ENCODE measurements at regions of chr2 and their contacts with region 1.

Region 1: GRCh38 chr2:160429248-160430000 is 64.2 kb downstream of the RBMS1 start:
- DNase-seq: peak; percentile 87
- H3K4me3 ChIP-seq: peak overlapping the region; percentile 35
- H3K27ac ChIP-seq: peak overlapping the region; percentile 90
- H3K4me1 ChIP-seq: peaks cover 68% of the 10 kb centered on the region
- H3K27me3 ChIP-seq: no peaks in the 10 kb centered on the region
- CTCF ChIP-seq: peak; percentile 70

Region 2: DNA sequence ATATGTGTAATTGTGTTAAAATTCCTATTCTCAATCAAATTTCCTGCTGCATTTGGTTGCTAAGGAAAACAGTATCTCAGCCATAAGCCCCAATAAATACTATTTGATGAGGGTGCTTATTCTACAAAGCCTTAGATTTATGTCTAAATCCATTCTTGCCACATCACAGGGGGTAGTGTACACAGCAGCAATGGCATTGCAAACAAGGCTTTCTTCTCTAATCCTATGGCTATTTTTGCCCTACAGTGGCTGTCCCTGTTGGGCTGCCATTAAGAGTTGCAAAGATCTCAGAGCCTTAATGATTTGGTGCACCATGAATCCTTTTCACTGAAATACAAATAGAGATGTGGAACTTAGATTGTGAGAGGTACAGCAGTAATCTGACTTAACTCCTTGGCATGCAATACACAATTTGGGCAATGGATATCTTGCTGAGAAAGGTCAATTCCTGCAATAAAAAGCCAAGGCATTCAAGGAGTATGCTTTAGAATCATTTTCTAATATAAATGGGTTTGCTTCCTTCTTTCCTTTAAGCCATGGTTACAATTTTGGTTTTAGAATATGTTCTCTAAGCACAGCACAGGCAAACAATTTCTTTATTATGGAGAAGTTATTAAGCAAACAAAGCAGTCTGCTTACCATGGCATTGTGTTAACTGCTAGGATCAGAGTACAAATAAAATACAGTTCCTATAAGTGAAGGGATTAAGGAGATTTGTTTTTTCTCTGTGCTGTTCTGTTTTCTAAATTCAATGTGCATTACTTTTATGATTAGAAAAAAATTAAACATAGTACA is 561.7 kb before region 1 on chr2:
- CTCF ChIA-PET with region 1: no interaction called
- POLR2A ChIA-PET with region 1: no interaction called
- intact Hi-C with region 1: no loop called
- DNase-seq: peak; percentile 7
- H3K4me3 ChIP-seq: no peak overlapping the region
- H3K27ac ChIP-seq: no peak overlapping the region
- H3K4me1 ChIP-seq: no peaks in the 10 kb centered on the region
- H3K27me3 ChIP-seq: no peaks in the 10 kb centered on the region
- CTCF ChIP-seq: no peak

Region 3: DNA sequence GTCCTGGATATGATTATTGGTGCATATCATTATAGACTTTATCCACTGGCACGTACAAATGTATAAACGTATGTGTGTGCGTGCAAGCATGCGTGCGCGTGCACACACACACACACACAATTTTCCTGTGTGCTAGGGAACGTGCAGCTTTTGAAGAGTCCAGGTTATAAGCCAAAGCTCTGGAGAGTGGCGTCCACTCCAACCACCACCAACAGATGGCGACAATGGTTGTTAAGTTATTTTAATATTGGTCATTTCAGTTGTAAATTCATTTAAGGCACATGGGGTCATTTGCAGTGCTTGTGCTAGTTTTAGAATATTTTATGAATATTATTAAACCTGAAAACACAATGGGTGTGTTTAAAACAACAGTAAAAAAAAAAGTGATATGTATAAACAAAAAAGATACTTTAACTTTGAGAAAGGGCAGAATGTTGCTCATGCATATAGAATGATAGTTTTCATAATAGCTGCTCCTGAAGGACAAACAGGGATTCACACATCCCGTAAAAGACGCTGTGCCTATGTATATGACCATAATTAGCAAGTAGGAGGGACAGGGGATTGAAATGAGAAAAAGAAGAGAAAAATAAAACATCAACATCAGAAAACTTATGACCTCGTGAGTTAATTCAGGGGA is 105.1 kb before region 1 on chr2:
- CTCF ChIA-PET with region 1: no interaction called
- POLR2A ChIA-PET with region 1: no interaction called
- intact Hi-C with region 1: no loop called
- DNase-seq: peak; percentile 61
- H3K4me3 ChIP-seq: no peak overlapping the region
- H3K27ac ChIP-seq: no peak overlapping the region
- H3K4me1 ChIP-seq: peaks cover 36% of the 10 kb centered on the region
- H3K27me3 ChIP-seq: no peaks in the 10 kb centered on the region
- CTCF ChIP-seq: peak; percentile 82

Region 4: DNA sequence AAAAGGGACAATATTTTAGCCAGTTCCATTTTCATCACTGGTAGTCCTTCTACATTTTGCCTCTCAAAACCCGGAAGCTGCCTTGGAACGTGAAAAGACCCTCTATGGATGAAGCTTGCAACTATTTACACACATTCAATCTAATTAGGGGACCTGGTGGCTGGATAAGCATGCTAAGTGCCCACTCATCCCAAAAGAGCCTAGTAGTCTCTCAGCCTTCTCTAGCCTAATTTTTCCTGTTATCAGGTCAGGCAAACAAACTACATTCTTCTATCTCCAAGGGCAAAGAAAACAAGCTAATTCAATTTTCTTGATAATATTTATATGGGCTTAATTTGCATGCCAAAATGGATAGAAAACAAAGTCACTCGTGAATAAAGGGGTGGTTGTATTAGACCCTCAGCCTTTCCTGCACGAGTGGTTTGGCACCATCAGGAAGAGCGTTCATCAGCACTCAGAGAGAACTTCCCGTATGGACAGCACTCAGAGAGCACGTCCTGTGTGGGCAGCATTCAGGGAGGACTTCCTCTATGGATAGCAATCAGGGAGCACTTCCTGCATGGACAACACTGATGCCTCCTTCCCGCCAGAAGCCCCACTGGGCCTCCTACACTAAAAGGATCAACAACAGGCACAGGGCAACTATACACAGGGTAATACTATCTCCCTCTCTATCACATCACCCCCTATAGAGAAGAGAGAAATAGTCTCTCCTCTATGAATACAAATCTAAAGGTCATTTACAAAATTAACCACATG is 58.0 kb before region 1 on chr2:
- CTCF ChIA-PET with region 1: no interaction called
- POLR2A ChIA-PET with region 1: no interaction called
- intact Hi-C with region 1: loop called (anchors 5 kb)
- DNase-seq: peak; percentile 89
- H3K4me3 ChIP-seq: no peak overlapping the region
- H3K27ac ChIP-seq: peak overlapping the region; percentile 76
- H3K4me1 ChIP-seq: peaks cover 93% of the 10 kb centered on the region
- H3K27me3 ChIP-seq: no peaks in the 10 kb centered on the region
- CTCF ChIP-seq: no peak

Region 5: GRCh38 chr2:160703648-160704585 is 274.5 kb after region 1 on chr2:
- CTCF ChIA-PET with region 1: no interaction called
- POLR2A ChIA-PET with region 1: no interaction called
- intact Hi-C with region 1: loop called (anchors 10 kb)
- DNase-seq: peak; percentile 61
- H3K4me3 ChIP-seq: no peak overlapping the region
- H3K27ac ChIP-seq: peak overlapping the region; percentile 18
- H3K4me1 ChIP-seq: peaks cover 58% of the 10 kb centered on the region
- H3K27me3 ChIP-seq: no peaks in the 10 kb centered on the region
- CTCF ChIP-seq: no peak

Region 6: GRCh38 chr2:160970052-160970965 is 540.9 kb after region 1 on chr2:
- CTCF ChIA-PET with region 1: no interaction called
- POLR2A ChIA-PET with region 1: no interaction called
- intact Hi-C with region 1: loop called (anchors 2 kb)
- DNase-seq: peak; percentile 84
- H3K4me3 ChIP-seq: no peak overlapping the region
- H3K27ac ChIP-seq: no peak overlapping the region
- H3K4me1 ChIP-seq: peaks cover 3% of the 10 kb centered on the region
- H3K27me3 ChIP-seq: no peaks in the 10 kb centered on the region
- CTCF ChIP-seq: peak; percentile 83